Gastrocnemius medialis (tissue), 4 donors: ENCODE measurements at regions of chr3 and their contacts with region 1.

Region 1: DNA sequence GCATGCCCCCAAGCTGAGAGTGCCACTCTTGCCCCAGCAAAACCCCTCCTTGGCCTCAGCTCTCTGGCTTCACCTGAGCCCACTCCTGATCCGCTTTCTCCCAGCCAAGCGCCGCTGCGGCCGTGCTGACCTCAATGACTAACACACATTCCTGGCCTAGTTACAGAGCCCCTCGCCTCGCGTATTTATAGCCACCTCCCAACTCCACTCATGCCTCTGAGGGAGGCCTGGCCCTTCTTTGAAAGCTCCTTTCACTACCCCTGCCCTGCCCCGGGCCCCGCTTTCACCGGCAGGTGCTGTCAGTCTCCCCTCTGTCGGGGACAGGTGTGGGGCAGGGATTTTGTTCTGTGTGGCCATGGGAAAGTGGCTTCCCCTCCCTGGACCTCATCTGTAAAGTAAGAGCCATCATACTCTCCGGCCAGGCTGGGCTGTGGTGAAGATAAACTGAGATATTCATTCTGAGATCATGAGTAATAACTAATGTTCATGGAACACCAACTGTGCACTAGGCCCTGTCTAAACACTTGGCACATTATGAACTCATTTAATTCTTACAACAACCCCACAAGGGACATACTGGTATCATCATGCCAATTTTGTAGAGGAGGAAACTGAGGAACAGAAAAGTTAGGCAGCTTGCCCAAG is 13.2 kb upstream of the ATP2B2 start:
- DNase-seq: peak; percentile 59 to 81
- ATAC-seq: peak; percentile 84 to 87
- H3K4me3 ChIP-seq: no peak overlapping the region
- H3K27ac ChIP-seq: peak overlapping the region; percentile 74 to 82 (median 78)
- H3K4me1 ChIP-seq: peaks cover 27 to 29% of the 10 kb centered on the region in 2 donors
- H3K27me3 ChIP-seq: no peaks in the 10 kb centered on the region
- CTCF ChIP-seq: no peak
- POLR2A ChIP-seq: no peak

Region 2: DNA sequence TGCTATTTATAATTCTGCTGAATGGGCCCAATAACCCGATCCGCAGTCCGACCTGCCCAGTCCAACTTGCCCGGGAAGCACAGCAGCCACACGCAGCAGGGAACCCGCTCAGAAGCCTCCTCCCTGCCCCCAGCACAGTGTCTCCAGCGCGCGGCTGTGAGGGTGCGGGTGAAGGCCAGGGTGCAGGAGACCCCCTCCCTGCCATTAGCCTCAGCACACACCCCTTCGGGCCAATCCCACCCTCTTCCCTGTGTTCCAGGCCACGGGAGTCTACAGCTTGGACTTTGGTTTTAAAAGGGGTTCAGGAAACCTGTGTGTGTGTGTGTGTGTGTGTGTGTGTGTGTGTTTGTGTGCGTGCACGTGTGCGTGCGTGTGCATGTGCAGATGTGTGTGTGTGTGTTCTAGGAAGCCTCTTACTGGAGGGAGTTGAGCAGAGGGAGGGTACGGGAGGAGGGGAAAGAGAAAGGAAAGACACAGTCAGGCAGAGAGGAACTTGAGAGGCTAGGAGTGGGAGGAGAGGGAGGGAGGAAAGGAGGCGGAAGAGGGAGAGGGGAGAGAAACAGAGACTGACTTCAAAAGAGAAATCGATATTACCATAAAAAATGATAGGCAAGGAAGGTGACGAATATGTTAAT is 47.5 kb before region 1 on chr3:
- in situ Hi-C with region 1: no loop called
- intact Hi-C with region 1: loop called (anchors 5 kb)
- DNase-seq: peak; percentile 24 to 41
- ATAC-seq: peak; percentile 28 to 40
- H3K4me3 ChIP-seq: peak overlapping the region in 3 of 4 donors; percentile 14 to 39 (median 14)
- H3K27ac ChIP-seq: peak overlapping the region; percentile 91 to 96 (median 94)
- H3K4me1 ChIP-seq: peaks cover 44 to 45% of the 10 kb centered on the region in 2 donors
- H3K27me3 ChIP-seq: no peaks in the 10 kb centered on the region
- CTCF ChIP-seq: no peak
- POLR2A ChIP-seq: no peak

Region 3: DNA sequence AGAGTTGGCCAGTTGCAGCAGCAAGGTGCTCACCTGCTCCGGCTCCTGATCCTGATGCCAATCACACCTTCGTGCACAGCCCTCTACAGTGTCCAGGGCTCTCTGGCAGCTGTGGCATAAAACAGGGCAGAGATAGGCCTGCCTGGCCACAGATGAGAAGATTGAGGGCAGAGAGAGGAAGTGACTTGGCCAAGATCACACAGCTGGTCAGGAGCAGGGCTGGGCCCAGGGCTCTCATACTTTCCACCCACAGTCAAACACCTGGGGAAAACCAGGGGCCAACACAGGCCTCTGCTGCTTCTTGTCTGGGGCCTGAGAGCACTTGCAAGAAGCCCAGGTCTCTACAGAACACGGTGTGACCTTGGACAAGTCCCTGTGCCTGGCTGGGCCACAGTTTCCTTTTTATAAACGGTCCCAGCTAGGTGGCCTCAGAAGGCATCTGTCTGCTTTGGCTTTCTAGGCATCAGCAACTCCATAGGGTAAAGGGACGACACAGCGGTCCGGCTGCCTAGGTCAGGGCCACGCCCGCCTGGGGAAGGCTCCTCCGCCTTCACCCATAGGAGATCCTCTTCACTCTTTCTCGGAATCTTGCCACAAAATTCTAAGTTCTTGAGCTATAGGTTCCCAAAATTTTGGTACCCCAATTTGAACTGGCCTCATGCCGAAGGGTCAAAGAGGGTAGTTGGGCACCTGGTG is 16.3 kb before region 1 on chr3:
- in situ Hi-C with region 1: no loop called
- intact Hi-C with region 1: loop called (anchors 1 kb)
- DNase-seq: no peak
- ATAC-seq: no peak
- H3K4me3 ChIP-seq: no peak overlapping the region
- H3K27ac ChIP-seq: no peak overlapping the region
- H3K4me1 ChIP-seq: no peaks in the 10 kb centered on the region
- H3K27me3 ChIP-seq: peaks cover 0 to 3% (median 0%) of the 10 kb centered on the region in 3 donors
- CTCF ChIP-seq: no peak
- POLR2A ChIP-seq: no peak

Region 4: GRCh38 chr3:10551821-10552630 is 33.4 kb after region 1 on chr3:
- in situ Hi-C with region 1: no loop called
- intact Hi-C with region 1: loop called (anchors 2 kb)
- DNase-seq: peak; percentile 25 to 47
- ATAC-seq: peak; percentile 21 to 45
- H3K4me3 ChIP-seq: no peak overlapping the region
- H3K27ac ChIP-seq: peak overlapping the region; percentile 2 to 74 (median 72)
- H3K4me1 ChIP-seq: peaks cover 36% of the 10 kb centered on the region in 2 donors
- H3K27me3 ChIP-seq: no peaks in the 10 kb centered on the region
- CTCF ChIP-seq: no peak
- POLR2A ChIP-seq: no peak

Region 5: GRCh38 chr3:10693460-10693859 is 174.8 kb after region 1 on chr3:
- in situ Hi-C with region 1: no loop called
- intact Hi-C with region 1: loop called (anchors 10 kb)
- DNase-seq: no peak
- ATAC-seq: peak; percentile 88 to 91
- H3K4me3 ChIP-seq: no peak overlapping the region
- H3K27ac ChIP-seq: peak overlapping the region in 3 of 4 donors; percentile 18 to 59 (median 36)
- H3K4me1 ChIP-seq: peaks cover 0 to 6% of the 10 kb centered on the region in 2 donors
- H3K27me3 ChIP-seq: no peaks in the 10 kb centered on the region
- CTCF ChIP-seq: peak in 4 of 5 experiments; percentile 36 to 50 (median 44)
- POLR2A ChIP-seq: no peak